ENCODE measurements at regions of chr15 and their contacts with region 1.

Region 1: DNA sequence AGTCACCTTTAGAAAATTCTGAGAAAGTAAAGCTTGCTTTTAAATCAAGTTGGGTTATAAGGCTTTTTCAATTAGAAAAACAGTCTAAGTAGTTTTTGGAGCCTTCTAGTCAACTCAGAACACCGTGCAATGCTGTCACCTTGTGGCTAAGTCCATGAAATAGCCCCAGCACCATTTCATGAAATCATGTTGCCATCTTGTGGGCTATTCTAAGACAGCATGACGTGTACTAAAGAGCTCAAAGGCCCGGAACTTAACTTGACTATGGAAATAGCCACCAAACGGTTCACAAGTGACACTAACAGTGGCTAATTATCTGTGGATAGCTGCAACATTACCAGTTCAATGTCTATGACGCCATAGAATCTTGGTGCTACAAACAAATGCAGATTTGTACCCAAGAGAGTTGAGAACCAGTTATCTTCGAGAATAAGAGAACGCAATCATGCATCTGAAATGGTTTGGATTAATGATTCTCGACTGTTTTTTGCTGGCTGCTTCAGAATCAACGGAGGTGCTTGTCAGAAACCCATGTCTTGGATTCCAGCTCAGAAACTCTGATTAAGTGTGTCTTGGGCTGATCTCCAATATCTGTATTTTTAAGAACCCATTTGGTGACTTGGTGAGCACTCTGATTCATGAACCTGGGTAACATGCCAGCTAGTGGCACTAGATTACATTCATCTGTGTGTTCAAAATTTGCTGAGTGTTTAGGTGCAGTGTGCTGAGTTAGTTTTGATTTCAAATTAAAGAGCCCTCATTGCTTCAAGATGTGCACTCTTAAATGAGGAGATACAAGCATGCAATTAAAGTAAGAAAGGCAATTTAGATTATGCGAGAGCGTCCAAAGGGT is 111.2 kb upstream of the MCTP2 start:
- DNase-seq: peak in 8 of 9 donors; percentile 11 to 61 (median 36)
- ATAC-seq: peak; percentile 98
- H3K4me3 ChIP-seq: no peak overlapping the region
- H3K4me3 Mint-ChIP-seq: no peak overlapping the region
- H3K27ac ChIP-seq: no peak overlapping the region
- H3K27ac Mint-ChIP-seq: no peak overlapping the region
- H3K4me1 ChIP-seq: no peaks in the 10 kb centered on the region
- H3K4me1 Mint-ChIP-seq: no peaks in the 10 kb centered on the region
- H3K27me3 ChIP-seq: no peaks in the 10 kb centered on the region
- H3K27me3 Mint-ChIP-seq: peaks cover 0 to 10% (median 0%) of the 10 kb centered on the region in 5 donors

Region 2: GRCh38 chr15:93030430-93031105 is 1089.6 kb before region 1 on chr15:
- CTCF ChIA-PET with region 1: interaction called, 4 read pairs
- POLR2A ChIA-PET with region 1: no interaction called
- intact Hi-C with region 1: loop called in 1 of 2 experiments (anchors 1 kb)
- DNase-seq: peak; percentile 38 to 69 (median 59)
- ATAC-seq: peak; percentile 85
- H3K4me3 ChIP-seq: no peak overlapping the region
- H3K4me3 Mint-ChIP-seq: peak overlapping the region in 1 of 10 donors; percentile 12
- H3K27ac ChIP-seq: no peak overlapping the region
- H3K27ac Mint-ChIP-seq: peak overlapping the region in 6 of 9 donors; percentile 69 to 82 (median 74)
- H3K4me1 ChIP-seq: peaks cover 0 to 11% of the 10 kb centered on the region in 2 donors
- H3K4me1 Mint-ChIP-seq: peaks cover 6 to 33% (median 20%) of the 10 kb centered on the region in 7 donors
- H3K27me3 ChIP-seq: no peaks in the 10 kb centered on the region
- H3K27me3 Mint-ChIP-seq: no peaks in the 10 kb centered on the region

Region 3: GRCh38 chr15:93035953-93036800 is 1084.0 kb before region 1 on chr15:
- CTCF ChIA-PET with region 1: no interaction called
- POLR2A ChIA-PET with region 1: no interaction called
- intact Hi-C with region 1: loop called in 1 of 2 experiments (anchors 1 kb)
- DNase-seq: peak in 5 of 9 donors; percentile 30 to 38 (median 31)
- ATAC-seq: peak; percentile 80
- H3K4me3 ChIP-seq: no peak overlapping the region
- H3K4me3 Mint-ChIP-seq: peak overlapping the region; percentile 41 to 81 (median 66)
- H3K27ac ChIP-seq: no peak overlapping the region
- H3K27ac Mint-ChIP-seq: peak overlapping the region in 1 of 9 donors; percentile 83
- H3K4me1 ChIP-seq: no peaks in the 10 kb centered on the region
- H3K4me1 Mint-ChIP-seq: peaks cover 4 to 11% (median 5%) of the 10 kb centered on the region in 7 donors
- H3K27me3 ChIP-seq: no peaks in the 10 kb centered on the region
- H3K27me3 Mint-ChIP-seq: peaks cover 0 to 4% (median 0%) of the 10 kb centered on the region in 5 donors

Region 4: GRCh38 chr15:93087825-93088199 is 1032.3 kb before region 1 on chr15:
- CTCF ChIA-PET with region 1: no interaction called
- POLR2A ChIA-PET with region 1: no interaction called
- intact Hi-C with region 1: loop called in 1 of 2 experiments (anchors 1 kb)
- DNase-seq: peak; percentile 15 to 68 (median 48)
- ATAC-seq: peak; percentile 84
- H3K4me3 ChIP-seq: peak overlapping the region; percentile 33
- H3K4me3 Mint-ChIP-seq: peak overlapping the region; percentile 75 to 94 (median 87)
- H3K27ac ChIP-seq: no peak overlapping the region
- H3K27ac Mint-ChIP-seq: peak overlapping the region in 1 of 9 donors; percentile 48
- H3K4me1 ChIP-seq: peaks cover 0 to 4% of the 10 kb centered on the region in 2 donors
- H3K4me1 Mint-ChIP-seq: peaks cover 10 to 26% (median 16%) of the 10 kb centered on the region in 7 donors
- H3K27me3 ChIP-seq: peaks cover 15 to 22% of the 10 kb centered on the region in 2 donors
- H3K27me3 Mint-ChIP-seq: peaks cover 64 to 72% (median 68%) of the 10 kb centered on the region in 5 donors

Region 5: GRCh38 chr15:93997084-93997918 is 122.8 kb before region 1 on chr15:
- CTCF ChIA-PET with region 1: no interaction called
- POLR2A ChIA-PET with region 1: no interaction called
- intact Hi-C with region 1: loop called in 1 of 2 experiments (anchors 1 kb)
- DNase-seq: no peak
- ATAC-seq: no peak
- H3K4me3 ChIP-seq: no peak overlapping the region
- H3K4me3 Mint-ChIP-seq: no peak overlapping the region
- H3K27ac ChIP-seq: no peak overlapping the region
- H3K27ac Mint-ChIP-seq: no peak overlapping the region
- H3K4me1 ChIP-seq: no peaks in the 10 kb centered on the region
- H3K4me1 Mint-ChIP-seq: peaks cover 0 to 3% (median 0%) of the 10 kb centered on the region in 7 donors
- H3K27me3 ChIP-seq: no peaks in the 10 kb centered on the region
- H3K27me3 Mint-ChIP-seq: peaks cover 0 to 12% (median 4%) of the 10 kb centered on the region in 5 donors

Region 6: DNA sequence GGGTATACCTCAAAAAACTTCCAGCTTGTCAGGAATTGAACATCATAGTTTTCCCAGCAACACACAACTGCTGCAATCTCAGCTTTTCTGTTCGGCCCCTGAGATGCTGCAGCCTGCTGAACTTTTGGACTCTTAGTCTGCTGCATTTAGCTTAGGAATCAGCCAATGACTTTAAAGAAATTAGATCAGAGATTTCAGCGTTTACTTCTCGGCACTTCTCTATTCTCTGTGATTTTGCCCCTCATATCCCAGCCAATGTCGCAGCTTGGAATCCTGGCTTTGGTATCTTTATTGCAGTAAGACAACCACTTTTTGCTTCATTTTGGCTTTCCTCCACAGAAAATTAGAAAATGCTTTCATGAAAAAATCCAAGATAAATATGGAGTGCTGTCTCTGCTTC is 24.9 kb after region 1 on chr15:
- CTCF ChIA-PET with region 1: no interaction called
- POLR2A ChIA-PET with region 1: no interaction called
- intact Hi-C with region 1: no loop called
- DNase-seq: no peak
- ATAC-seq: no peak
- H3K4me3 ChIP-seq: no peak overlapping the region
- H3K4me3 Mint-ChIP-seq: no peak overlapping the region
- H3K27ac ChIP-seq: no peak overlapping the region
- H3K27ac Mint-ChIP-seq: no peak overlapping the region
- H3K4me1 ChIP-seq: no peaks in the 10 kb centered on the region
- H3K4me1 Mint-ChIP-seq: no peaks in the 10 kb centered on the region
- H3K27me3 ChIP-seq: no peaks in the 10 kb centered on the region
- H3K27me3 Mint-ChIP-seq: peaks cover 29 to 41% (median 36%) of the 10 kb centered on the region in 5 donors

Region 7: GRCh38 chr15:94174399-94174802 is 54.3 kb after region 1 on chr15:
- CTCF ChIA-PET with region 1: no interaction called
- POLR2A ChIA-PET with region 1: no interaction called
- intact Hi-C with region 1: no loop called
- DNase-seq: no peak
- ATAC-seq: peak; percentile 90
- H3K4me3 ChIP-seq: no peak overlapping the region
- H3K4me3 Mint-ChIP-seq: peak overlapping the region in 1 of 10 donors; percentile 4
- H3K27ac ChIP-seq: no peak overlapping the region
- H3K27ac Mint-ChIP-seq: peak overlapping the region in 1 of 9 donors; percentile 5
- H3K4me1 ChIP-seq: no peaks in the 10 kb centered on the region
- H3K4me1 Mint-ChIP-seq: peaks cover 0 to 35% (median 0%) of the 10 kb centered on the region in 7 donors
- H3K27me3 ChIP-seq: no peaks in the 10 kb centered on the region
- H3K27me3 Mint-ChIP-seq: peaks cover 0 to 22% (median 5%) of the 10 kb centered on the region in 5 donors

Measured in naive thymus-derived CD4-positive, alpha-beta T cell (primary cell).